ENCODE measurements at regions of chr17 and their contacts with region 1.

Region 1: DNA sequence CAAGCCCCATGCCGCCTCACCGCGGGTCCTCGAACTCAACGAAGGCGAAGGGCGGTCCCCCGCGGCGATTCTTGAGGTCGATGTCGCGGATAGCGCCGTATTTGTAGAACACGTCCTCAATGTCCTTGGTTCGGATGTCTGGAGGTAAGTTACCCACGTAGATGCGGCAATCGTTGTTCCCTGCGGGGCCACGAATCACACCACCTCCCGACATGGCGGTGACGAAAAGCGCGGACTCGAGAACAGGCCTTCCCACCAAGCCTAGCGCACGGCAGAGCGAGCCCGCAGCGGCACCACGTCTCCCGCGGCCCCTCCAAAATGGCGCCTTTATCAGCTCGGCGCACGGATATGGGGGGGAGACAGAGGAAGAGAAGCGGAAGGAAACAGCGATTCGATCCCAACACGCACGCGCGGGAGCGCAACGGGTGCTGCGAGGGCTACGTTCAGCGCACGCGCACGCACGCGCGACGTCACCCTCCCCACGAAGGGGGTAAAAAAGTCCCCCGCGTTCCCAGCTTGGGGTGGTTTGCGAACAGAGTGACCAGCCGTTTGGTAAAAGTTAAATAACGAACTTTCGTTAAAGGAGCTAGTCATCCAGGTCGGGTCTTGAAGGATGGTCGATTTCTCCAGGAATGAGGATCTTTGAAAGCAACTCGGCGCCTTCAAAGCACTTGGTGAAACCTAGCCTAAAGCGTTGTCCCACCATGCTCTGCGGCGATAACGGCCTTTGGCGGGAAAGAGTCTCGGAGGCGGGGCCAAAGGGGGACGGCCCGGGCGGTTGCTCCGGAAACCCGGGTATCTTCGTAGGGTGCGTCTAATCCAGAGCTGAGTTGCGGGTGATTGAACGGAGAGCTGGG is at the start of gene SRSF1:
- DNase-seq: peak; percentile 99
- ATAC-seq: peak; percentile 90
- H3K4me3 Mint-ChIP-seq: peak within 1 kb of the TSS; percentile 100
- H3K27ac Mint-ChIP-seq: peak within 1 kb of the TSS; percentile 100
- H3K4me1 Mint-ChIP-seq: peaks cover 35% of the 10 kb centered on the region
- H3K27me3 Mint-ChIP-seq: no peaks in the 10 kb centered on the region
- total RNA-seq, gene SRSF1: 271 to 368 TPM

Region 2: DNA sequence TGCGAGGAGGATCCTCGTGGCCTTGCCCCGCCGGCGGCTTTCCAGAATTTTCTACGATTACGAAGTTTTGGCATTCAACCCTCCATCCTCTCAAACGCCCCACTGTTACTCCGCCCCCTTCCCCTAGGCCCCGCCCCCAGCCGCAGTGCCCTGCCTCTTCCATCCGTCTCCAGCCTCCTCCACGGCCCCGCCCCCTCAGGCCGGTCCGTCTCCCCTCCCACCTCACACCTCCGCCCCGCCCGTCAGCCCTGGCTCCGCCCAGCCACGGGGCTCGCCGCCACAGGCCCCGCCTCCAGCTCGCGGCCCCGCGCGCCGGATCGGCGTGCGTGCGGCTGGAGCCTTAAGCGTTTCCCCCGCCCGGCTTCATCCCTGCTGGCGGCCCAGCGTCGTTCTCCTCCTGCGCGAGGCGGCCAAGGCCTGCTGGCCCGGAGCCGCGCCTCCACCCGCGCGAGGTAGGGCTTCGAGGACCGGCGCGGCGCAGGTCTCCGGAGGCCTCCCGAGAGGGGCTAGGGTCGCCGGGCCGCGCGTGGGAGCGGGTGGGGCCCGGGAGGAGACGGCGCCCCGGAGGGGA is 1173.3 kb before region 1 on chr17 and contains the starts of genes C17orf67 and DGKE:
- CTCF ChIA-PET with region 1: no interaction called
- POLR2A ChIA-PET with region 1: no interaction called
- intact Hi-C with region 1: loop called in 1 of 2 experiments (anchors 2 kb)
- DNase-seq: peak; percentile 100
- ATAC-seq: peak; percentile 93
- H3K4me3 Mint-ChIP-seq: peak within 1 kb of the TSS; percentile 86
- H3K27ac Mint-ChIP-seq: peak within 1 kb of the TSS; percentile 90
- H3K4me1 Mint-ChIP-seq: peaks cover 62% of the 10 kb centered on the region
- H3K27me3 Mint-ChIP-seq: no peaks in the 10 kb centered on the region
- total RNA-seq, gene C17orf67: 4.0 to 5.0 TPM
- total RNA-seq, gene DGKE: 22.4 to 27.4 TPM

Region 3: GRCh38 chr17:57849874-57850754 is 157.0 kb before region 1 on chr17 and contains the start of gene MRPS23:
- CTCF ChIA-PET with region 1: interaction called, 249 read pairs
- POLR2A ChIA-PET with region 1: interaction called, 22 read pairs
- intact Hi-C with region 1: loop called (anchors 1 to 2 kb)
- DNase-seq: peak; percentile 99
- ATAC-seq: peak; percentile 91
- H3K4me3 Mint-ChIP-seq: peak within 1 kb of the TSS; percentile 98
- H3K27ac Mint-ChIP-seq: peak within 1 kb of the TSS; percentile 95
- H3K4me1 Mint-ChIP-seq: peaks cover 30% of the 10 kb centered on the region
- H3K27me3 Mint-ChIP-seq: no peaks in the 10 kb centered on the region
- total RNA-seq, gene MRPS23: 42.6 to 69.7 TPM

Region 4: GRCh38 chr17:58052945-58053846 is 46.0 kb after region 1 on chr17:
- CTCF ChIA-PET with region 1: no interaction called
- POLR2A ChIA-PET with region 1: no interaction called
- intact Hi-C with region 1: loop called in 1 of 2 experiments (anchors 2 kb)
- DNase-seq: peak; percentile 52
- ATAC-seq: peak; percentile 89
- H3K4me3 Mint-ChIP-seq: no peak overlapping the region
- H3K27ac Mint-ChIP-seq: peak overlapping the region; percentile 8
- H3K4me1 Mint-ChIP-seq: peaks cover 15% of the 10 kb centered on the region
- H3K27me3 Mint-ChIP-seq: peaks cover 5% of the 10 kb centered on the region

Region 5: DNA sequence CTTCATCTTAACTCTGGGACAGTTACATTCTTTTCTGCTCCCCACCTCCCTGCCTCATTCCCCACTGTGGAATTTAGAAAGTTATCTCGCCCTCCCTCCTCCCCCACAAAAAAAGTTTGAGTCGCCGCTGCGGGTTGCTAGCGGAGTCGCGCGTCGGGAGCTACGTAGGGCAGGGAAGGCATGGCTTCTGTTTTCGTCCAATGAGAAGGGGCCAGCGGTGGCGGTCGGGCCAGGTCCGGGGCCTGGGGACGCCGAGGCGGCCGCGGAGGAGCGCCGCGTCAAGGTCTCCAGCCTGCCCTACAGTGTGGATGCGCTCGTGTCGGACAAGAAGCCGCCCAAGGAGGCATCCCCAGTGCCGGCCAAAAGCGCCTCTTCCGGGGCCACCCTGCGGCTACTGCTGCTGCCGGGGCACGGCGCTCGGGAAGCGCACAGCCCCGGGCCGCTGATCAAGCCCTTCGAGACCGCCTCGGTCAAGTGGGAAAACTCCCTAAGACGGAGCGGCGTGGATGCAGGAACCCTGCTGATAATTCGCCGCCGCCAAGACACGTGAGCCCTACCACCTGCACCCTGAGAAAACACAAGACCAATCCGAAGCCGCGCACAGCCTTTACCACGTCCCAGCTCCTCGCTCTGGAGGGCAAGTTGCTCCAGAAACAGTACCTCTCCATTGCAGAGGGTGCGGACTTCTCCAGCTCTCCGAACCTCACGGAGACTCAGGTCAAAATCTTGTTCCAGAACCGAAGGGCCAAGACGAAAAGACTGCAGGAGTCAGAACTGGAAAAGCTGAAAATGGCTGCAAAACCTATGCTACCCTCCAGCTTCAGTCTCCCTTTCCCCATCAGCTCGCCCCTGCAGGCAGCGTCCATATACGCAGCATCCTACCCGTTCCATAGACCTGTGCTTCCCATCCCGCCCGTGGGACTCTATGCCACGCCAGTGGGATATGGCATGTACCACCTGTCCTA is 150.0 kb after region 1 on chr17:
- CTCF ChIA-PET with region 1: interaction called, 3 read pairs
- POLR2A ChIA-PET with region 1: no interaction called
- intact Hi-C with region 1: loop called in 1 of 2 experiments (anchors 5 kb)
- DNase-seq: peak; percentile 78
- ATAC-seq: peak; percentile 90
- H3K4me3 Mint-ChIP-seq: peak overlapping the region; percentile 83
- H3K27ac Mint-ChIP-seq: peak overlapping the region; percentile 84
- H3K4me1 Mint-ChIP-seq: peaks cover 47% of the 10 kb centered on the region
- H3K27me3 Mint-ChIP-seq: no peaks in the 10 kb centered on the region

Region 6: GRCh38 chr17:58329035-58329809 is 322.1 kb after region 1 on chr17:
- CTCF ChIA-PET with region 1: no interaction called
- POLR2A ChIA-PET with region 1: interaction called, 6 read pairs
- intact Hi-C with region 1: loop called in 1 of 2 experiments (anchors 2 kb)
- DNase-seq: peak; percentile 93
- ATAC-seq: peak; percentile 43
- H3K4me3 Mint-ChIP-seq: peak overlapping the region; percentile 100
- H3K27ac Mint-ChIP-seq: peak overlapping the region; percentile 93
- H3K4me1 Mint-ChIP-seq: peaks cover 39% of the 10 kb centered on the region
- H3K27me3 Mint-ChIP-seq: peaks cover 2% of the 10 kb centered on the region

Region 7: GRCh38 chr17:58631523-58632323 is 624.6 kb after region 1 on chr17:
- CTCF ChIA-PET with region 1: no interaction called
- POLR2A ChIA-PET with region 1: interaction called, 7 read pairs
- intact Hi-C with region 1: loop called in 1 of 2 experiments (anchors 5 kb)
- DNase-seq: peak; percentile 96
- ATAC-seq: peak; percentile 97
- H3K4me3 Mint-ChIP-seq: no peak overlapping the region
- H3K27ac Mint-ChIP-seq: no peak overlapping the region
- H3K4me1 Mint-ChIP-seq: peaks cover 3% of the 10 kb centered on the region
- H3K27me3 Mint-ChIP-seq: no peaks in the 10 kb centered on the region